CD4-positive, alpha-beta memory T cell (primary cell): ENCODE measurements at regions of chr1 and their contacts with region 1.

Region 1: GRCh38 chr1:89125913-89126580 is at the start of gene GBP2:
- DNase-seq: peak; percentile 34 to 54 (median 43)
- H3K4me3 ChIP-seq: peak within 1 kb of the TSS; percentile 75 to 83
- H3K4me3 Mint-ChIP-seq: peak within 1 kb of the TSS; percentile 97 to 100 (median 100)
- H3K27ac ChIP-seq: peak within 1 kb of the TSS; percentile 80
- H3K27ac Mint-ChIP-seq: peak within 1 kb of the TSS; percentile 93 to 100 (median 99)
- H3K4me1 ChIP-seq: peaks cover 52% of the 10 kb centered on the region
- H3K4me1 Mint-ChIP-seq: peaks cover 40 to 77% (median 55%) of the 10 kb centered on the region in 4 donors
- H3K27me3 ChIP-seq: no peaks in the 10 kb centered on the region
- H3K27me3 Mint-ChIP-seq: no peaks in the 10 kb centered on the region
- total RNA-seq, gene GBP2: 186 to 199 TPM

Region 2: GRCh38 chr1:89022167-89022959 is 103.7 kb before region 1 on chr1 and contains the start of gene GBP3:
- CTCF ChIA-PET with region 1: interaction called, 9 read pairs
- POLR2A ChIA-PET with region 1: interaction called, 8 read pairs
- intact Hi-C with region 1: loop called (anchors 2 kb)
- DNase-seq: peak in 4 of 5 donors; percentile 39 to 56 (median 45)
- H3K4me3 ChIP-seq: peak within 1 kb of the TSS; percentile 49 to 87
- H3K4me3 Mint-ChIP-seq: peak within 1 kb of the TSS; percentile 90 to 100 (median 95)
- H3K27ac ChIP-seq: peak within 1 kb of the TSS; percentile 73
- H3K27ac Mint-ChIP-seq: peak within 1 kb of the TSS; percentile 84 to 99 (median 94)
- H3K4me1 ChIP-seq: peaks cover 39% of the 10 kb centered on the region
- H3K4me1 Mint-ChIP-seq: peaks cover 29 to 69% (median 45%) of the 10 kb centered on the region in 4 donors
- H3K27me3 ChIP-seq: no peaks in the 10 kb centered on the region
- H3K27me3 Mint-ChIP-seq: no peaks in the 10 kb centered on the region
- total RNA-seq, gene GBP3: 51.8 to 54.1 TPM

Region 3: DNA sequence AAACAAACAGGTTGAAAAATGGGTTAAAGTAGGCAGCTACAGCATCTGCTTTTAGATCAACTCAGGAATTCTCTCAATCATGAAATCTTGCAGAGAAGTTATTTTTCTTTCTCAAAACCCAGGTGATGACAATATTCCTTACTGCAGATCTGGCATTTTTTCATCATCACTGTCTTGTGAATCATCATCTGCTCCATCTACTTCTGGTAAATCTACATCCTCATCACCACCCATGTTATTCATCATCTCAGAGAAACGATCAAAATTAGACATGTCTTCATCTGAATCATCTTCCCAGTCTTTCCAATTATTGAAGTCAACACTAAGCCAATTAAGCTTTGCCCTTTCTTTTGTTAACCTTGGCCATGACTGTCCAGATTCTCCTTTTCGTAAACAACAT is 21.9 kb before region 1 on chr1:
- CTCF ChIA-PET with region 1: no interaction called
- POLR2A ChIA-PET with region 1: interaction called, 3 read pairs
- intact Hi-C with region 1: loop called (anchors 2 kb)
- DNase-seq: no peak
- H3K4me3 ChIP-seq: no peak overlapping the region
- H3K4me3 Mint-ChIP-seq: no peak overlapping the region
- H3K27ac ChIP-seq: no peak overlapping the region
- H3K27ac Mint-ChIP-seq: peak overlapping the region in 2 of 7 donors; percentile 4 to 56
- H3K4me1 ChIP-seq: no peaks in the 10 kb centered on the region
- H3K4me1 Mint-ChIP-seq: peaks cover 0 to 12% (median 3%) of the 10 kb centered on the region in 4 donors
- H3K27me3 ChIP-seq: no peaks in the 10 kb centered on the region
- H3K27me3 Mint-ChIP-seq: no peaks in the 10 kb centered on the region

Region 4: DNA sequence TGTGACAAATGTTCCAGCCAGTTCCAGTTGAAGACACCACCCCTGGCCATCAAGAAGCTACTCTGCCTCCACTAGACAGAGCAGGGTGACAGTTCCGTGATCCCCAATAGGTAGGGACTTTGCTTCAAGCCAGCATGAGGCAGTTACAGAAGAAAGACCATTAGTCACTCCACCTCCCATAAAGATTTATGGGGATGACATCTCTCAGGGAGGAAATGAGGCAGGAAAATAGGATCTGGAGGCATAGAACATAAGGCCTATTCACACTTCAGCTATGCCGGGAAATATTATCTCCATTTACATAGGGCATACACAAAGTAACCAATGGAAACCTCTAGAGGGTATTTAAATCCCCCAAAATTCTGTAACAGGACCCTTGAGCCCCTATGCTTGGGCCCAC is 53.3 kb after region 1 on chr1:
- CTCF ChIA-PET with region 1: interaction called, 3 read pairs
- POLR2A ChIA-PET with region 1: interaction called, 12 read pairs
- intact Hi-C with region 1: no loop called
- DNase-seq: no peak
- H3K4me3 ChIP-seq: no peak overlapping the region
- H3K4me3 Mint-ChIP-seq: no peak overlapping the region
- H3K27ac ChIP-seq: no peak overlapping the region
- H3K27ac Mint-ChIP-seq: no peak overlapping the region
- H3K4me1 ChIP-seq: no peaks in the 10 kb centered on the region
- H3K4me1 Mint-ChIP-seq: peaks cover 0 to 4% (median 2%) of the 10 kb centered on the region in 4 donors
- H3K27me3 ChIP-seq: no peaks in the 10 kb centered on the region
- H3K27me3 Mint-ChIP-seq: no peaks in the 10 kb centered on the region

Region 5: DNA sequence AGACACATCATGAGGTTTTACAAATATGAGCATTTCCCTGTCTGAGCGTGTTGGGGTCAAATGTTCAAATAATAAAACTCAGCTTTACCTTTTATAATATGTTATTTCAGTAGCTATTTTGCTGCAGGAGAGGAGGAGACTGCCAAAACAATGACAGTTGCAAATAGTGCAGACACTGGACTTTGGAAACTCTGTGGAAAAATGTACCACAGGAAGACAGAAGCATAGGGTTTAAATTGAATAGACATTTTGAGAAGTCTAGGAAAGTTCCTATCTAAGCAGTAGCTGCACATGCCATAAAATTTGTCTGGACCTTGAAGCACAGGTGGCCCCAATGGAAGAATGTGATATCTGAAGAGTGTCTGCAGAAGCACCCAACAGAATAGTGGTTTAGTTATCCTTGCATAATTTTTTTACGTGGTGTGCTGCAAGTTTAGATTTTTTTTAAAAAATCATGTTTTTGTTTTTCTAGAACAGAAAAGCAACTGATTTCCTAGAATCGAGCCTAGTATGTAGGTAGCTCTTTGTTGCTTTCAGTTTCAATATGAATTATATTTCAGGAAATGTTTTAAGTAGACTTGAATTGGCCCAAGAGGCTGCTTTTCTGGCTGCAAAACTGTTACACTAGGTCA is 160.6 kb after region 1 on chr1:
- CTCF ChIA-PET with region 1: no interaction called
- POLR2A ChIA-PET with region 1: interaction called, 11 read pairs
- intact Hi-C with region 1: no loop called
- DNase-seq: peak in 4 of 5 donors; percentile 39 to 58 (median 46)
- H3K4me3 ChIP-seq: peak overlapping the region; percentile 14 to 21
- H3K4me3 Mint-ChIP-seq: peak overlapping the region; percentile 45 to 78 (median 76)
- H3K27ac ChIP-seq: peak overlapping the region; percentile 61
- H3K27ac Mint-ChIP-seq: peak overlapping the region; percentile 83 to 96 (median 94)
- H3K4me1 ChIP-seq: peaks cover 67% of the 10 kb centered on the region
- H3K4me1 Mint-ChIP-seq: peaks cover 60 to 76% (median 69%) of the 10 kb centered on the region in 4 donors
- H3K27me3 ChIP-seq: no peaks in the 10 kb centered on the region
- H3K27me3 Mint-ChIP-seq: no peaks in the 10 kb centered on the region

Region 6: DNA sequence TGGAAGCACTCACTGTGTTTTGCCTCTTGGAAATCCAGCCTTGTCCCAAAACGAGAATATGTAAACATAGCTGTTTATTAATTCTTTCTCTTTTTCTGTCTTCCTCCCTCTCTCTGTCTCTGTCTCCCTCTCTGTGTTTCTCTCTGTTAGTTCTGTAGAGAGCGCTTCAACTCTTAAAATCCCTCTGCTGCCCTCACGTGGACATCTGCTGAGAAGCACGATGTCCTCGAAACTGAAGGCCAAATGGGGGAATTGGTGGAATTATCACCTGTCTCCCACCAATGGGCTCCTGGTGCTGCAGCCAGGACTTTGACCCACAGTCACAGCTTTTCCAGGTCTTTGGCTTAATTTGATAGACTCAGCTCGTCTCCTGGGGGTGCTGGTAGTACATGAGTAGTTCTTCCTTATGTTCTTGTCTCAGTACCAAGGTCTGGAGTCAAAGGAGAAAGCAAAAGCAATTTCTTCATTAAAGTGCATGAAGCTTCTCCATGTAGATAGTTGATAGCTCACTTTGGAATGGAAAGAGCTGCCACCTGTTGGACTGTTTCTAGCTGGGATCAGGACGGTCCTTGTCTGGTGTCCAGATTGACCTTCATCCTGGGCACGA is 232.3 kb after region 1 on chr1:
- CTCF ChIA-PET with region 1: interaction called, 11 read pairs
- POLR2A ChIA-PET with region 1: interaction called, 4 read pairs
- intact Hi-C with region 1: loop called (anchors 1 kb)
- DNase-seq: peak; percentile 76 to 81 (median 77)
- H3K4me3 ChIP-seq: no peak overlapping the region
- H3K4me3 Mint-ChIP-seq: peak overlapping the region in 5 of 8 donors; percentile 0 to 80 (median 57)
- H3K27ac ChIP-seq: no peak overlapping the region
- H3K27ac Mint-ChIP-seq: peak overlapping the region in 5 of 7 donors; percentile 50 to 66 (median 57)
- H3K4me1 ChIP-seq: peaks cover 27% of the 10 kb centered on the region
- H3K4me1 Mint-ChIP-seq: peaks cover 15 to 29% (median 25%) of the 10 kb centered on the region in 4 donors
- H3K27me3 ChIP-seq: no peaks in the 10 kb centered on the region
- H3K27me3 Mint-ChIP-seq: no peaks in the 10 kb centered on the region